ENCODE measurements at regions of chr19 and their contacts with region 1.

Region 1: DNA sequence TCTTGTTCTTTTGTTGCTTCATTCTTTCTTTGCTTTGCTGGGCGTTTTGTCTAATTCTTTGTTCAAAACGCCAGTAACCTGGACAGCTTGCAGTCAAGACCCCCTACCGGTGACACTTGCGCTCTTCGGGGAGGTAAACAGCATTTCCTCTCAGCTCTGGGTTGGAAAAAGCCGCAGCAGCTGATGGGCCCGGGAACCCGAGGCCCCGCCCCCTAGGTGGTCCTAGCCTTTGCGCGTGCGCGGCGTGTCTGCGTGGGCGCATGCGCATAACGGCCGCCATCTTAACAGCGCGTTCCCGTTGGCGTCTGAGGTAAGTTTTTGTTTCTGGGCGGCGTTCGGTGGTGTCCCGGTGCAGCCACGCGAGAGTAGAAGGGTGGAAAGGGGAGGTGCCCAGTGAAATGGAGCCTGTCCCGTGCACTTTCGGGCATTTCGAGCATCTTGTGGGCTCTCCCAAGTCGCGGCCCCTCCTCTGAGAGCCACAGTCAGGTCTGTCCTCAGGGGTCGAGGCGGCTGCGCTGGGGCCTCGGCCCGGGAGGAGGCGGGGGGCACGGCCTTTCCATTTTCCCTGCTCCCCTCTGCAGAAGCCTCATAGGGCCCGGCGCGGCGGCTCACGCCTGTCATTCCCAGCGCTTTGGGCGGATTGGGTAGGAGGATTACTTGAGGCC is at the start of gene ZNF559:
- DNase-seq: peak; percentile 89 to 93
- H3K4me3 ChIP-seq: peak within 1 kb of the TSS; percentile 66
- H3K27ac ChIP-seq: peak within 1 kb of the TSS; percentile 41
- H3K4me1 ChIP-seq: peaks cover 6% of the 10 kb centered on the region
- H3K27me3 ChIP-seq: no peaks in the 10 kb centered on the region
- CTCF ChIP-seq: peak; percentile 48; the same call in 1 of the 2 replicates
- total RNA-seq, gene ZNF559: 10.5 and 12.5 TPM in 2 replicates

Region 2: GRCh38 chr19:9309139-9309973 is 14.7 kb before region 1 on chr19 and contains the start of gene ZNF699:
- CTCF ChIA-PET with region 1: interaction called, 3 read pairs
- POLR2A ChIA-PET with region 1: no interaction called
- intact Hi-C with region 1: loop called (anchors 1 kb)
- DNase-seq: peak; percentile 96
- H3K4me3 ChIP-seq: peak within 1 kb of the TSS; percentile 64
- H3K27ac ChIP-seq: peak within 1 kb of the TSS; percentile 14; the same call in 1 of the 2 replicates
- H3K4me1 ChIP-seq: peaks cover 9% of the 10 kb centered on the region; the same call in 1 of the 2 replicates
- H3K27me3 ChIP-seq: no peaks in the 10 kb centered on the region
- CTCF ChIP-seq: no peak
- total RNA-seq, gene ZNF699: 2.2 and 2.6 TPM in 2 replicates

Region 3: GRCh38 chr19:9406798-9407352 is 82.8 kb after region 1 on chr19:
- CTCF ChIA-PET with region 1: no interaction called
- POLR2A ChIA-PET with region 1: no interaction called
- intact Hi-C with region 1: loop called (anchors 5 kb)
- DNase-seq: peak; percentile 56 to 74
- H3K4me3 ChIP-seq: peak overlapping the region; percentile 59
- H3K27ac ChIP-seq: no peak overlapping the region
- H3K4me1 ChIP-seq: peaks cover 11% of the 10 kb centered on the region; the same call in 1 of the 2 replicates
- H3K27me3 ChIP-seq: no peaks in the 10 kb centered on the region
- CTCF ChIP-seq: no peak